ENCODE measurements at regions of chr7 and their contacts with region 1.

Region 1: GRCh38 chr7:116929914-116930913 is 23.1 kb upstream of the ST7 start:
- DNase-seq: peak; percentile 60
- ATAC-seq: peak; percentile 93
- H3K4me3 Mint-ChIP-seq: no peak overlapping the region
- H3K27ac Mint-ChIP-seq: no peak overlapping the region
- H3K4me1 Mint-ChIP-seq: peaks cover 3% of the 10 kb centered on the region
- H3K27me3 Mint-ChIP-seq: peaks cover 8% of the 10 kb centered on the region
- CTCF ChIP-seq: peak; percentile 42

Region 2: GRCh38 chr7:116984917-116985316 is 54.7 kb after region 1 on chr7:
- CTCF ChIA-PET with region 1: interaction called, 14 read pairs
- POLR2A ChIA-PET with region 1: no interaction called
- intact Hi-C with region 1: loop called (anchors 1 kb)
- DNase-seq: no peak
- ATAC-seq: peak; percentile 49
- H3K4me3 Mint-ChIP-seq: no peak overlapping the region
- H3K27ac Mint-ChIP-seq: no peak overlapping the region
- H3K4me1 Mint-ChIP-seq: no peaks in the 10 kb centered on the region
- H3K27me3 Mint-ChIP-seq: no peaks in the 10 kb centered on the region
- CTCF ChIP-seq: peak; percentile 76

Region 3: DNA sequence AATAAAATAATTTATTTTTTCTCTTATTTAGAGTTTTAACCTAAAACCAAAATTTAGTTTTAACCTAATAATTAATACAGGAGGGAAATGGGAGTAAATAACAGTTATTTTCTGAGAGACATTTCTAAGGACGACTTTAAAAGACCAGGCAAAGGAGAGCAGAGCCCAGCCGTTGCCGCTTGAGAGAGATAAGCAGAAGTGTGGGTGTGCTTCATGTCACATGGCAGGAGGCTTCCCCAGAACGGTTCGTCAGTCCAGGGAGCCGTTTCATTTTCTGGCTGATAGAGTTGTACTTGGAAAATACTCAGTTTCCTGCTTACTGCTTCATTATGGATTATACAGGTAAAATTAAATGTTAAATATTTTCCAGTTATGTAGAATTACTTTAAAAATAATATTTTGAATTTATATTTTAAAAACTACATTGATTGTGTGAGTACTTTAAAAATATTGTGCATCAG is 84.5 kb after region 1 on chr7:
- CTCF ChIA-PET with region 1: no interaction called
- POLR2A ChIA-PET with region 1: no interaction called
- intact Hi-C with region 1: loop called (anchors 1 kb)
- DNase-seq: no peak
- ATAC-seq: no peak
- H3K4me3 Mint-ChIP-seq: no peak overlapping the region
- H3K27ac Mint-ChIP-seq: no peak overlapping the region
- H3K4me1 Mint-ChIP-seq: peaks cover 50% of the 10 kb centered on the region
- H3K27me3 Mint-ChIP-seq: peaks cover 3% of the 10 kb centered on the region
- CTCF ChIP-seq: no peak

Region 4: GRCh38 chr7:117119192-117119924 is 189.1 kb after region 1 on chr7:
- CTCF ChIA-PET with region 1: interaction called, 73 read pairs
- POLR2A ChIA-PET with region 1: no interaction called
- intact Hi-C with region 1: loop called (anchors 1 kb)
- DNase-seq: peak; percentile 41
- ATAC-seq: no peak
- H3K4me3 Mint-ChIP-seq: no peak overlapping the region
- H3K27ac Mint-ChIP-seq: no peak overlapping the region
- H3K4me1 Mint-ChIP-seq: no peaks in the 10 kb centered on the region
- H3K27me3 Mint-ChIP-seq: no peaks in the 10 kb centered on the region
- CTCF ChIP-seq: peak; percentile 66

Region 5: GRCh38 chr7:117127585-117128168 is 197.5 kb after region 1 on chr7:
- CTCF ChIA-PET with region 1: interaction called, 73 read pairs
- POLR2A ChIA-PET with region 1: no interaction called
- intact Hi-C with region 1: loop called (anchors 1 kb)
- DNase-seq: no peak
- ATAC-seq: peak; percentile 40
- H3K4me3 Mint-ChIP-seq: no peak overlapping the region
- H3K27ac Mint-ChIP-seq: no peak overlapping the region
- H3K4me1 Mint-ChIP-seq: no peaks in the 10 kb centered on the region
- H3K27me3 Mint-ChIP-seq: no peaks in the 10 kb centered on the region
- CTCF ChIP-seq: no peak

Region 6: GRCh38 chr7:117715784-117716445 is 785.7 kb after region 1 on chr7:
- CTCF ChIA-PET with region 1: no interaction called
- POLR2A ChIA-PET with region 1: no interaction called
- intact Hi-C with region 1: loop called (anchors 2 kb)
- DNase-seq: no peak
- ATAC-seq: no peak
- H3K4me3 Mint-ChIP-seq: no peak overlapping the region
- H3K27ac Mint-ChIP-seq: no peak overlapping the region
- H3K4me1 Mint-ChIP-seq: no peaks in the 10 kb centered on the region
- H3K27me3 Mint-ChIP-seq: peaks cover 4% of the 10 kb centered on the region
- CTCF ChIP-seq: no peak

Region 7: GRCh38 chr7:117876761-117877160 is 946.5 kb after region 1 on chr7:
- CTCF ChIA-PET with region 1: no interaction called
- POLR2A ChIA-PET with region 1: no interaction called
- intact Hi-C with region 1: no loop called
- DNase-seq: no peak
- ATAC-seq: no peak
- H3K4me3 Mint-ChIP-seq: no peak overlapping the region
- H3K27ac Mint-ChIP-seq: no peak overlapping the region
- H3K4me1 Mint-ChIP-seq: peaks cover 18% of the 10 kb centered on the region
- H3K27me3 Mint-ChIP-seq: peaks cover 30% of the 10 kb centered on the region
- CTCF ChIP-seq: no peak

Region 8: DNA sequence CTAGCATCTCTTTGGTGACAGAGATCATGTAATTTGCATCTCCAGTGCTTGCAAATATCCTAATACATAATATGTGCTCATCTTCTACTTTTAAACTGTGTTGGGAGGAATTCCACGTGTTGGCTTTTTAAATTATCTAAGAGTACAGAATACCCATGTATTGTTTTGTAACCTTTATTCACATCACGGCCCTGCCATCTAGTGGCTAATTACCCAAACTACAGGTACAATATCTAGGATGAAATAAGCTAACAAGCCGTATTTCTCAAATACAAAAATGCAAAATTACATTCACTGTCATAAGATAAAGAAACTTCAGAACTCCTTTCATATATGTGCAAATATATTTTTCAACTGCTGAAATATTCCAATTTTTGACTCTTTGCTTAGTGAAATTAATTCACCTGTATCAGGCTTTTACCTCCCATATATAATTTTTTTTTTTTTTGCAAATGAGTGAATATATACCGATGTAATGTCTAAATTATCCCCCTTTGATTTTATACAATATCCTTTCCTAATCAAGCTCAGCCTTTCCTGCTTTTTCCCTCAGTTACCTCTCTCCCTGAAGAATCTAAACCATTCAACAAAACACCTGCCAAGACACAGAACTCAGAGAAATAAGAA is 1223.5 kb after region 1 on chr7:
- CTCF ChIA-PET with region 1: no interaction called
- POLR2A ChIA-PET with region 1: no interaction called
- intact Hi-C with region 1: loop called (anchors 1 kb)
- DNase-seq: no peak
- ATAC-seq: peak; percentile 49
- H3K4me3 Mint-ChIP-seq: no peak overlapping the region
- H3K27ac Mint-ChIP-seq: no peak overlapping the region
- H3K4me1 Mint-ChIP-seq: no peaks in the 10 kb centered on the region
- H3K27me3 Mint-ChIP-seq: no peaks in the 10 kb centered on the region
- CTCF ChIP-seq: peak; percentile 71

Measured in activated B cell treated with CpG ODN at 0.5 μM for 24 hours (primary cell).